Calu3 (cell line): ENCODE measurements at regions of chr13 and their contacts with region 1.

Region 1: GRCh38 chr13:31545616-31546015 is 193.7 kb upstream of the RXFP2 start:
- DNase-seq: no peak
- H3K4me3 Mint-ChIP-seq: no peak overlapping the region
- H3K27ac Mint-ChIP-seq: no peak overlapping the region
- H3K4me1 Mint-ChIP-seq: no peaks in the 10 kb centered on the region
- H3K27me3 Mint-ChIP-seq: no peaks in the 10 kb centered on the region
- CTCF ChIP-seq: no peak

Region 2: GRCh38 chr13:31322026-31322425 is 223.6 kb before region 1 on chr13:
- CTCF ChIA-PET with region 1: no interaction called
- intact Hi-C with region 1: no loop called
- DNase-seq: no peak
- H3K4me3 Mint-ChIP-seq: no peak overlapping the region
- H3K27ac Mint-ChIP-seq: no peak overlapping the region
- H3K4me1 Mint-ChIP-seq: no peaks in the 10 kb centered on the region
- H3K27me3 Mint-ChIP-seq: no peaks in the 10 kb centered on the region
- CTCF ChIP-seq: no peak

Region 3: GRCh38 chr13:31587698-31588266 is 42.2 kb after region 1 on chr13:
- CTCF ChIA-PET with region 1: no interaction called
- intact Hi-C with region 1: loop called (anchors 5 kb)
- DNase-seq: no peak
- H3K4me3 Mint-ChIP-seq: no peak overlapping the region
- H3K27ac Mint-ChIP-seq: peak overlapping the region; percentile 61
- H3K4me1 Mint-ChIP-seq: peaks cover 18% of the 10 kb centered on the region
- H3K27me3 Mint-ChIP-seq: no peaks in the 10 kb centered on the region
- CTCF ChIP-seq: no peak